ENCODE measurements at regions of chr13 and their contacts with region 1.

Region 1: DNA sequence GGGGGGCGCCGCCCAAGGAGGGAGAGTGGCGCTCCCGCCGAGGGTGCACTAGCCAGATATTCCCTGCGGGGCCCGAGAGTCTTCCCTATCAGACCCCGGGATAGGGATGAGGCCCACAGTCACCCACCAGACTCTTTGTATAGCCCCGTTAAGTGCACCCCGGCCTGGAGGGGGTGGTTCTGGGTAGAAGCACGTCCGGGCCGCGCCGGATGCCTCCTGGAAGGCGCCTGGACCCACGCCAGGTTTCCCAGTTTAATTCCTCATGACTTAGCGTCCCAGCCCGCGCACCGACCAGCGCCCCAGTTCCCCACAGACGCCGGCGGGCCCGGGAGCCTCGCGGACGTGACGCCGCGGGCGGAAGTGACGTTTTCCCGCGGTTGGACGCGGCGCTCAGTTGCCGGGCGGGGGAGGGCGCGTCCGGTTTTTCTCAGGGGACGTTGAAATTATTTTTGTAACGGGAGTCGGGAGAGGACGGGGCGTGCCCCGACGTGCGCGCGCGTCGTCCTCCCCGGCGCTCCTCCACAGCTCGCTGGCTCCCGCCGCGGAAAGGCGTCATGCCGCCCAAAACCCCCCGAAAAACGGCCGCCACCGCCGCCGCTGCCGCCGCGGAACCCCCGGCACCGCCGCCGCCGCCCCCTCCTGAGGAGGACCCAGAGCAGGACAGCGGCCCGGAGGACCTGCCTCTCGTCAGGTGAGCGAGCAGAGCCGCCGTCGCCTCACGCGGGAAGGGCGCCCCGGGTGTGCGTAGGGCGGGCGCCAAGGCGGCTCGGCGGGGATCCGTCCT is at the start of gene RB1:
- DNase-seq: peak; percentile 72 to 96 (median 88)
- ATAC-seq: peak; percentile 77 to 86 (median 84)
- H3K4me3 ChIP-seq: peak within 1 kb of the TSS; percentile 96 to 98
- H3K4me3 Mint-ChIP-seq: peak within 1 kb of the TSS; percentile 94 to 97 (median 95)
- H3K27ac ChIP-seq: peak within 1 kb of the TSS; percentile 99
- H3K27ac Mint-ChIP-seq: peak within 1 kb of the TSS; percentile 95 to 98
- H3K4me1 ChIP-seq: peaks cover 11 to 16% of the 10 kb centered on the region in 2 experiments
- H3K4me1 Mint-ChIP-seq: peaks cover 31 to 39% (median 33%) of the 10 kb centered on the region in 3 donors
- H3K27me3 ChIP-seq: no peaks in the 10 kb centered on the region
- H3K27me3 Mint-ChIP-seq: no peaks in the 10 kb centered on the region
- total RNA-seq, gene RB1: 17.8 to 26.6 (median 24.0) TPM

Region 2: GRCh38 chr13:48118030-48118429 is 185.5 kb before region 1 on chr13:
- CTCF ChIA-PET with region 1: no interaction called
- POLR2A ChIA-PET with region 1: interaction called in 1 of 2 experiments, 10 read pairs
- DNase-seq: no peak
- ATAC-seq: no peak
- H3K4me3 ChIP-seq: no peak overlapping the region
- H3K4me3 Mint-ChIP-seq: no peak overlapping the region
- H3K27ac ChIP-seq: no peak overlapping the region
- H3K27ac Mint-ChIP-seq: no peak overlapping the region
- H3K4me1 ChIP-seq: no peaks in the 10 kb centered on the region
- H3K4me1 Mint-ChIP-seq: no peaks in the 10 kb centered on the region
- H3K27me3 ChIP-seq: peaks cover 0 to 2% of the 10 kb centered on the region in 2 experiments
- H3K27me3 Mint-ChIP-seq: peaks cover 4 to 8% of the 10 kb centered on the region in 2 donors

Region 3: GRCh38 chr13:48246102-48246501 is 57.4 kb before region 1 on chr13:
- CTCF ChIA-PET with region 1: no interaction called
- POLR2A ChIA-PET with region 1: no interaction called
- DNase-seq: no peak
- ATAC-seq: no peak
- H3K4me3 ChIP-seq: no peak overlapping the region
- H3K4me3 Mint-ChIP-seq: peak overlapping the region in 2 of 3 donors; percentile 5 to 30
- H3K27ac ChIP-seq: no peak overlapping the region
- H3K27ac Mint-ChIP-seq: peak overlapping the region in 1 of 2 donors; percentile 55
- H3K4me1 ChIP-seq: peaks cover 10 to 15% of the 10 kb centered on the region in 2 experiments
- H3K4me1 Mint-ChIP-seq: peaks cover 80 to 81% (median 80%) of the 10 kb centered on the region in 3 donors
- H3K27me3 ChIP-seq: no peaks in the 10 kb centered on the region
- H3K27me3 Mint-ChIP-seq: no peaks in the 10 kb centered on the region

Region 4: DNA sequence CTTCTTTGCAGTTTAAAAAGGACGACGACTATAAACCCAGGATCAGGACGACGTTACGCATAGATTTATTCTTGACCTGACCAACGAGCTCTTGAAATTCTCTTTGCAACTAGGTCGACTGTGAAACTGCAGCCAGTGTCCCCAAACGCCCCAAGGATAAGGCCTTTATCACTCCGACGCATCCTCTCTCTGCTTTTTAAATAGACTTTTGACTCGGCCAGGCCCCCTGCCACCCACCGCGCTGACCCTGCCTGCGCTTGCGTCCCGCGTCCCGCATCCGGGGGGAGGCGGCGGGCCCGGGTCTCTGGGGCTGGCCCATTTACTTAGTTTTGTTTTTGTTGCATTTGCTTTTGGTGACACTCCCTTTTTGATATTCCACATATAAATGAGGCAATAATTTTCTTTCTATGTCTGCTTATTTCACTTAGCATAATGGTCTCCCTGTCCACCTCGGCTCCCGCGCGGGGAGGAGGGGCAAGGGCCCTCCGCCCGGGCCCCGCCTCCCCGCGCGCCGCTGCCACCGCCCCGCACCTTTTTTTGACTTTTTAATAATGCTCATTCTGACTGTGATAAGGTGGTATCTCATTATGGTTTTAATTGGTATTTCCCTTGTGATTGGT is 17.4 kb after region 1 on chr13:
- CTCF ChIA-PET with region 1: interaction called in 1 of 2 experiments, 3 read pairs
- POLR2A ChIA-PET with region 1: interaction called, 4 to 10 read pairs
- DNase-seq: no peak
- ATAC-seq: no peak
- H3K4me3 ChIP-seq: peak overlapping the region; percentile 47 to 74
- H3K4me3 Mint-ChIP-seq: peak overlapping the region; percentile 79 to 90 (median 80)
- H3K27ac ChIP-seq: no peak overlapping the region
- H3K27ac Mint-ChIP-seq: peak overlapping the region in 1 of 2 donors; percentile 16
- H3K4me1 ChIP-seq: peaks cover 0 to 31% of the 10 kb centered on the region in 2 experiments
- H3K4me1 Mint-ChIP-seq: peaks cover 23 to 39% (median 28%) of the 10 kb centered on the region in 3 donors
- H3K27me3 ChIP-seq: peaks cover 0 to 5% of the 10 kb centered on the region in 2 experiments
- H3K27me3 Mint-ChIP-seq: no peaks in the 10 kb centered on the region

Region 5: DNA sequence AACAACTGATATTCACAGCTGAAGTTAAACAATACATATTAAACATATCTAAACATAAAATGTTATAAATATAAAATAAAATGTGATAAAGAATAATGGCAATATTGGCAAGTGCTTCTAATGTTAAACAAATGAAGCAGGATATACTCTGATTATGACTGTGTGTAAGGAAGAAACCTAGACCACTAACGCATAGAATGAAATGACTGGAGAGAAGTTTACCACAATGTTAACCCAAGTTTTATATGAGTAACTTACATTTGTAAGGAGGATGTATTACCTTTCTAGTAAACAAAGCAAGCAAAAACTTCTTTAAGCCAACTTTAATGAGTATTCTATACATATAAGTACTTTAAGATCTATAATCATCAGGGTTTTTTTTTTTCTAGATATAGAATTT is 43.0 kb after region 1 on chr13:
- CTCF ChIA-PET with region 1: no interaction called
- POLR2A ChIA-PET with region 1: no interaction called
- DNase-seq: no peak
- ATAC-seq: no peak
- H3K4me3 ChIP-seq: no peak overlapping the region
- H3K4me3 Mint-ChIP-seq: no peak overlapping the region
- H3K27ac ChIP-seq: no peak overlapping the region
- H3K27ac Mint-ChIP-seq: no peak overlapping the region
- H3K4me1 ChIP-seq: no peaks in the 10 kb centered on the region
- H3K4me1 Mint-ChIP-seq: peaks cover 0 to 2% (median 0%) of the 10 kb centered on the region in 3 donors
- H3K27me3 ChIP-seq: no peaks in the 10 kb centered on the region
- H3K27me3 Mint-ChIP-seq: no peaks in the 10 kb centered on the region

Region 6: DNA sequence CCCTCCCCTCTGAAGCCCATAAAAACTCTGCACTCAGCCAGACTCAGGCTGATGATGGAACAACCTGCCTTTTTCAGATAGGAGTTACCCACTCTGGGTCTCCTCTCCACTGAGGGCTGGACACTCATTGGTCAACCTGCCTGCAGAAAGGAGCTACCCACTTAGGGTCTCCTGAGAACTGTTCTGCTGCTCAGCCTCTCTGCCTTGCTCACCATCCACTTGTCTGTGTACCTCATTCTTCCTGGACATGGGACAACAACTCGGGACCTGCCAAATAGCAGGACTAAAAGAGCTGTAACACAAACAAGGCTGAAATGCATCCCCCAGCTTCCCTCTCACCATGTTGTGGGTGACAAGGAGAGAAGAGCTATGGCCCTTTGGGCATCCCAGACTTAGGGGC is 247.8 kb after region 1 on chr13:
- CTCF ChIA-PET with region 1: no interaction called
- POLR2A ChIA-PET with region 1: no interaction called
- DNase-seq: no peak
- ATAC-seq: no peak
- H3K4me3 ChIP-seq: no peak overlapping the region
- H3K4me3 Mint-ChIP-seq: no peak overlapping the region
- H3K27ac ChIP-seq: no peak overlapping the region
- H3K27ac Mint-ChIP-seq: no peak overlapping the region
- H3K4me1 ChIP-seq: no peaks in the 10 kb centered on the region
- H3K4me1 Mint-ChIP-seq: no peaks in the 10 kb centered on the region
- H3K27me3 ChIP-seq: peaks cover 3 to 8% of the 10 kb centered on the region in 2 experiments
- H3K27me3 Mint-ChIP-seq: peaks cover 0 to 2% of the 10 kb centered on the region in 2 donors